Activated B cell treated with CpG ODN at 0.5 μM for 24 hours (primary cell): ENCODE measurements at regions of chr11 and their contacts with region 1.

Region 1: DNA sequence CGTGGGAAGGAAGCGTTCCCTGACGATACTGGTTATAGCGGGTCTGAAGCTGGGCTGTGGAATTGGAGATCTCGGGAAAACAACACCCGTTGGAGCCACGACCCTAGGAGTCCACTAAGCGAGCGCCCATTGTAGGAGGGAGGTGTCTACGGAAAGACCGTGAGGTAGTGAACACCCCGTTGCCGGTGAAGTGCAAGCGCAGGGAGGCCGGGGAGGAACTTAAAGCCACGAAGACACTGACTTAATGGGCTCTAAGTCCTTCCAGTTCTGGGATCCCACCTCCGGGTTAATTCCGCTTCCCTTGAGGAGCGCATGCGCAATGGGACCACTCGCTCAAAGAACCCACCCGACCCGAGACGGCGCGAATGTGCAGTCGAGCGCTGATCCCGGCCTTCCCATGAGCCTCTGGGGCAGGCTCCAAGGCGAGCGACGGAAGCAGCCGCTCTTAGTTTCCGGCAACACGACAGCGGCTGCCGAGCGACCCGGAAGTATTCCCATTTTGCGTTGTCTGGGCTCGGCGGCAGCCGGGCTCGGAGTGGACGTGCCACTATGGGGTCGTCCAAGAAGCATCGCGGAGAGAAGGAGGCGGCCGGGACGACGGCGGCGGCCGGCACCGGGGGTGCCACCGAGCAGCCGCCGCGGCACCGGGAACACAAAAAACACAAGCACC is at the start of gene SART1:
- DNase-seq: peak; percentile 85
- ATAC-seq: peak; percentile 89
- H3K4me3 Mint-ChIP-seq: peak within 1 kb of the TSS; percentile 97
- H3K27ac Mint-ChIP-seq: peak within 1 kb of the TSS; percentile 95
- H3K4me1 Mint-ChIP-seq: peaks cover 50% of the 10 kb centered on the region
- H3K27me3 Mint-ChIP-seq: no peaks in the 10 kb centered on the region
- CTCF ChIP-seq: no peak
- total RNA-seq, gene SART1: 86.6 and 92.3 TPM in 2 replicates

Region 2: GRCh38 chr11:65927904-65928397 is 33.4 kb before region 1 on chr11:
- CTCF ChIA-PET with region 1: no interaction called
- POLR2A ChIA-PET with region 1: interaction called, 11 read pairs
- intact Hi-C with region 1: loop called (anchors 2 kb)
- DNase-seq: peak; percentile 45
- ATAC-seq: peak; percentile 93
- H3K4me3 Mint-ChIP-seq: peak overlapping the region; percentile 79
- H3K27ac Mint-ChIP-seq: peak overlapping the region; percentile 93
- H3K4me1 Mint-ChIP-seq: peaks cover 22% of the 10 kb centered on the region
- H3K27me3 Mint-ChIP-seq: no peaks in the 10 kb centered on the region
- CTCF ChIP-seq: no peak